Mucosa of descending colon (tissue), 3 donors: ENCODE measurements at regions of chr15 and their contacts with region 1.

Region 1: GRCh38 chr15:78709263-78709882 is 68.4 kb upstream of the CHRNB4 start:
- DNase-seq: peak; percentile 74 to 79 (median 76)
- ATAC-seq: peak; percentile 99
- H3K4me3 ChIP-seq: no peak overlapping the region
- H3K4me1 ChIP-seq: no peaks in the 10 kb centered on the region
- CTCF ChIP-seq: peak; percentile 81

Region 2: GRCh38 chr15:78353093-78353492 is 356.3 kb before region 1 on chr15:
- intact Hi-C with region 1: no loop called
- DNase-seq: no peak
- ATAC-seq: no peak
- H3K4me3 ChIP-seq: no peak overlapping the region
- H3K4me1 ChIP-seq: no peaks in the 10 kb centered on the region
- CTCF ChIP-seq: no peak

Region 3: GRCh38 chr15:78618490-78618934 is 90.9 kb before region 1 on chr15:
- intact Hi-C with region 1: loop called (anchors 5 kb)
- DNase-seq: peak in 2 of 3 donors; percentile 72 to 99
- ATAC-seq: peak; percentile 81
- H3K4me3 ChIP-seq: no peak overlapping the region
- H3K4me1 ChIP-seq: peaks cover 10% of the 10 kb centered on the region
- CTCF ChIP-seq: peak; percentile 67